ENCODE measurements at regions of chr2 and their contacts with region 1.

Region 1: GRCh38 chr2:197399887-197400540 is 34.8 kb downstream of the SF3B1 start:
- DNase-seq: no peak
- ATAC-seq: no peak
- H3K4me3 ChIP-seq: no peak overlapping the region
- H3K4me1 ChIP-seq: no peaks in the 10 kb centered on the region
- CTCF ChIP-seq: no peak

Region 2: DNA sequence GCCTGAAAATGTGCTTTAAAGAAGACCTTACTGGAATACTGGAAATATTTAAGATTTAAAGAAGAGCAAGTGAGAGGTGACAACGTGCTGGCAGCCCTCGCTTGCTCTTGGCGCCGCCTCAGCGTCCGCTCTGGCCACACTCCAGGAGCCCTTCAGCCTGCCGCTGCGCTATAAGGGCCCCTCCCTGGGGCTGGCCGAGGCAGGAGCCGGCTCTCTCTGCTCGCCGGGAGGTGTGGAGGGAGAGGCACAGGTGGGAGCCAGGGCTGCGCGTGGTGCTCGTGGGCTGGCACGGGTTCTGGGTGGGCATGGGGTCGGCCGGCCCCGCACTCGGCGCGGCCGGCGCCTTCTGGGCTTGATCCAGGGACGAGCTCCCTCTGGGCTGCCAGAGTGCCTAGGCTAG is 50.5 kb after region 1 on chr2:
- intact Hi-C with region 1: no loop called
- DNase-seq: peak in 1 of 3 donors; percentile 51
- ATAC-seq: no peak
- H3K4me3 ChIP-seq: no peak overlapping the region
- H3K4me1 ChIP-seq: peaks cover 12% of the 10 kb centered on the region
- CTCF ChIP-seq: no peak

Region 3: GRCh38 chr2:197477797-197478196 is 77.8 kb after region 1 on chr2:
- intact Hi-C with region 1: loop called in 1 of 2 experiments (anchors 10 kb)
- DNase-seq: no peak
- ATAC-seq: no peak
- H3K4me3 ChIP-seq: no peak overlapping the region
- H3K4me1 ChIP-seq: no peaks in the 10 kb centered on the region
- CTCF ChIP-seq: no peak

Measured in mucosa of descending colon (tissue), 3 donors.